Heart right ventricle (tissue), 16 donors: ENCODE measurements at regions of chr7 and their contacts with region 1.

Region 1: GRCh38 chr7:150955519-150956394 is 22.4 kb downstream of the KCNH2 start:
- DNase-seq: peak; percentile 51 to 70
- ATAC-seq: peak; percentile 39 to 69 (median 52)
- H3K4me3 ChIP-seq: peak overlapping the region in 1 of 10 donors; percentile 11
- H3K27ac ChIP-seq: peak overlapping the region; percentile 67 to 90 (median 75)
- H3K4me1 ChIP-seq: peaks cover 11 to 79% (median 40%) of the 10 kb centered on the region in 9 donors
- H3K27me3 ChIP-seq: peaks cover 0 to 53% (median 35%) of the 10 kb centered on the region in 7 donors
- CTCF ChIP-seq: peak in 1 of 9 donors; percentile 12

Region 2: DNA sequence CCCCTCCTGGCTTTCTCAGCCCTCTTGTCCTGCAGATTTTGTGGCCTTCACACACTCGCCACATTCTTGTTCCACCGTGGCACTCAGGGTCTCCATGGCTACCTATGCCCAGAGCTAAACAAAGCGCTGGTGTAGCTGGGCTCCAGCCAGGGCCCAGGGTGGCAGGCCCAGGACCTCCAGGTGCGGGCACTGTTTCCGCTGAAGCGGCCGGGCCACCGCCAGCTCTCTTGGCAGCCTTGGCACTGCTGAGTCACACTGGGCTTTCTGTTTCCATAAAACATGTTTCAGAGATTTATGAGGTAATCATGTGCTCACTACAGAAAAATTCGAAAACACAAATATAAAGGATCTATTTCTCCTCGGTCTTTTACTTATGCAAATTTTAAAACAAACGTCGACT is 52.2 kb before region 1 on chr7:
- intact Hi-C with region 1: loop called in 5 of 10 experiments (anchors 5 to 10 kb)
- DNase-seq: peak; percentile 77 to 82
- ATAC-seq: peak; percentile 75 to 98 (median 94)
- H3K4me3 ChIP-seq: no peak overlapping the region
- H3K27ac ChIP-seq: peak overlapping the region in 8 of 10 donors; percentile 2 to 71 (median 46)
- H3K4me1 ChIP-seq: peaks cover 0 to 35% (median 11%) of the 10 kb centered on the region in 9 donors
- H3K27me3 ChIP-seq: peaks cover 0 to 55% (median 17%) of the 10 kb centered on the region in 7 donors
- CTCF ChIP-seq: peak in 3 of 9 donors; percentile 14 to 22 (median 17)